Caki2 (cell line): ENCODE measurements at regions of chr4 and their contacts with region 1.

Region 1: DNA sequence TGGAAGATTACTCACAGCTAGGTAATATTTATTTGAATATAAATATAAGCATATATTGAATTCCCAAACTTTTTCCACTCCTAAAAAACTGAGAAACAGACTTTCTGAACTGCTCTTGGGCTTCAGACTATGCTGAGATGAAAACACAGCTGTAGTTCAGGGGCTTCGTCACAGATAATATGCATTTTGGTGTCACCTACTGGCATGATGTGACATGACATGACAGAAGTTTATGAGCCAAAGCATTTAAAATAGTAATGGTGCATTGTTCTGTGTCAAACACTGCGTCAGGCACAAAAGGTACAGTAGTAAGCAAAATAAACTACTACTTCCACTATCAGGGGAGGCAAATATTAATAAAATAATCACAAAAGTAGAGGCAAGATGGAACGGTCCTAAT is 171.3 kb downstream of the BTC start:
- DNase-seq: peak; percentile 61

Region 2: GRCh38 chr4:74370912-74371311 is 252.1 kb before region 1 on chr4:
- in situ Hi-C with region 1: loop called (anchors 10 kb)
- DNase-seq: peak; percentile 69